CD4-positive, alpha-beta memory T cell (primary cell): ENCODE measurements at regions of chr4 and their contacts with region 1.

Region 1: DNA sequence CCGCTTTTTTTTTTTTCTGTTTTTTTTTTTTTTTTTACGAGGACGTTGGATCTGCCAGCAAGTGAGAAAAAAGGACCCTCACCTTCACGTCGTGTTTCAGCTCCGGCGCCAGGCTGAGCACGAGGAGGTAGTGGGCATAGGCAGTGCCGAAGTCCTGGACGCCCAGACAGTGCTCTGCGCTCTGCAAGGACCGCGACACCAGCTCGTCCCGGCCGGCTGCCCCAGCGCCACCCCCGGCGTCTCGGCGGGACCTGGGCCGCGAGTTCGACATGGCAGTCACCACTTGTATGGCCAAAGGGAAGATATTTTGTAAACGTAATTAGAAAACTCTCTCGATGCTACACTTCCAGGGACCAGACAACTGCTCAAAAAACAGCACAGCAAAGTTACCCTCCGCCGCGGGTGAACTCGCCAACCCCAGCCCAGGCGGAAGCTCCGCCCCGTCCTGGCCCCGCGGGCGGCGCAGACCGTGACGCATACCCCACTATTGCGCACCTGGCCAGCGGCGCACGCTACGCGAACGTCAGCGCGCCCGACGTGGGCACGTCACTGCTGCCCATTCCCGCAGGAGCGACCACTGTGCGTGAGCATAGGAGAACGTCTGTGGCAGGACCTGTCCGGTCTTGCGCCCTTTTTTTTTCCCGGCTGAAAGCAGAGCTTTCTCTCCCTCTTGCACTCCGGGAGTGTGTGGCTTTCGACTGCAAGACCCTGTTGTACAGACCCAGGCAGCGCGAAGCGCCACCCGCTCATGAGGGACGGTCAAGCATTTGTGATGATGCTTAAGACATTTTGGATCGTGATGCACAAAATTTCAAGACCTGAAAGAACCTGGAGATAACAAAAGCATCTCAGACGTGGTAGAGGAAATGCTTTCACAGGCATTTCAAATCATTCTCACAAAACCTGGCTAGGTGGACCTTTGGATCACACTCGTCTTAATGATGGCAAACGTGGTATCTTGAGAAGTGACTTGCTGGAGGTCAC is at the start of gene PRMT9:
- DNase-seq: peak; percentile 82 to 89 (median 85)
- H3K4me3 ChIP-seq: peak within 1 kb of the TSS; percentile 75 to 96
- H3K4me3 Mint-ChIP-seq: peak within 1 kb of the TSS; percentile 92 to 99 (median 96)
- H3K27ac ChIP-seq: peak within 1 kb of the TSS; percentile 89
- H3K27ac Mint-ChIP-seq: peak within 1 kb of the TSS; percentile 96 to 99 (median 98)
- H3K4me1 ChIP-seq: peaks cover 15% of the 10 kb centered on the region
- H3K4me1 Mint-ChIP-seq: peaks cover 25 to 42% (median 33%) of the 10 kb centered on the region in 4 donors
- H3K27me3 ChIP-seq: no peaks in the 10 kb centered on the region
- H3K27me3 Mint-ChIP-seq: peaks cover 3% of the 10 kb centered on the region in 2 donors
- total RNA-seq, gene PRMT9: 12.1 to 12.6 TPM

Region 2: DNA sequence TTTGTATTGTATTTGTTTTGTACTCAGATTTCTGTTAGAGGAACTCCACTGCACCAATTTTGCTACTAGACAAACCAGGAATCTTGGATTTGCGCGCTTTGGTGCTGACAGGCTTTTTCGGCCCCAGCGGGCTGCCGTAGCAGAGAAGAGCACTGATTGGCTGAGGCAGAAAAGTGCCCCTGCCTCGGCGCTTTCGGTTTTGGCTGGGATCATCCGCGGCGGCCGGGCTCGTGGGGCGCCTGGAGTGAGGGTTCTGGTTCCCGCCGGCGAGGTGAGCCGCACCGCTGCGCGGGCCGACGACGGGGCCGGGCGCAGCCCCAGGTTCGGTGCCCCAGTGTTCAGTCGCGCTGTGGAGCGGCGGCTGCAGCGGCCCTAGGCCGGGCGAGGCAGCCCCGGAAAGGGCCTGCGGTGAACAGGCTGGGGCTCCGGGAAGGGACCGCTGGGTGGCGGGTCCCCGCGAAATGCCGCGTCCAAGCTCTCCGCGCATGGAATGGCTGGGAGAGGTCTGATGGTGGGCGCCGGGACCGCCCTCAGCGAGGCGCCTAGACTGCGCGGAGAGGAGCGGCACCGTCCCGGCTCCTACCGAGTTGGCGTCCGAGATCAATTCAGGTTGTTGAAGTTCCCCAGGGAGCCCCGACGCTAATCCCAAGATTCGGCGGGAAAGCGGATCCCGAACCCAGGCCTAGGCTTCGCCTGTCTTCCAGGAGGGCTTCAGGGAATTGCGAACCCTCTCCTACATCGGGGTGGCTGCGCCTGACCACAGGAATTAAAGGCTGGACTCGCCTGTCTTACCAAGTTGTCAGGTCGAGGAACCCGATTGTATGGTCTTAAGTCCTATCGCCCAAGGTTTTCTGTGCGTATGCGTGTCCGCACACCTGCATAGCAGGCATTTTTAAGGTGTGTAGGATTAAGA is 1508.2 kb before region 1 on chr4 and contains the start of gene LSM6:
- CTCF ChIA-PET with region 1: no interaction called
- POLR2A ChIA-PET with region 1: no interaction called
- intact Hi-C with region 1: loop called (anchors 10 kb)
- DNase-seq: peak; percentile 83 to 87 (median 84)
- H3K4me3 ChIP-seq: peak within 1 kb of the TSS; percentile 39 to 96
- H3K4me3 Mint-ChIP-seq: peak within 1 kb of the TSS; percentile 86 to 96 (median 92)
- H3K27ac ChIP-seq: peak within 1 kb of the TSS; percentile 81
- H3K27ac Mint-ChIP-seq: peak within 1 kb of the TSS; percentile 93 to 98 (median 97)
- H3K4me1 ChIP-seq: peaks cover 53% of the 10 kb centered on the region
- H3K4me1 Mint-ChIP-seq: peaks cover 34 to 63% (median 42%) of the 10 kb centered on the region in 4 donors
- H3K27me3 ChIP-seq: no peaks in the 10 kb centered on the region
- H3K27me3 Mint-ChIP-seq: no peaks in the 10 kb centered on the region
- total RNA-seq, gene LSM6: 47.7 to 54.0 TPM

Region 3: GRCh38 chr4:147617173-147617840 is 66.7 kb before region 1 on chr4 and contains the start of gene TMEM184C:
- CTCF ChIA-PET with region 1: interaction called, 7 read pairs
- POLR2A ChIA-PET with region 1: interaction called, 63 read pairs
- intact Hi-C with region 1: loop called (anchors 1 kb)
- DNase-seq: peak; percentile 97 to 98 (median 98)
- H3K4me3 ChIP-seq: peak within 1 kb of the TSS; percentile 82 to 99
- H3K4me3 Mint-ChIP-seq: peak within 1 kb of the TSS; percentile 92 to 98 (median 96)
- H3K27ac ChIP-seq: peak within 1 kb of the TSS; percentile 93
- H3K27ac Mint-ChIP-seq: peak within 1 kb of the TSS; percentile 96 to 99 (median 97)
- H3K4me1 ChIP-seq: peaks cover 49% of the 10 kb centered on the region
- H3K4me1 Mint-ChIP-seq: peaks cover 22 to 51% (median 36%) of the 10 kb centered on the region in 4 donors
- H3K27me3 ChIP-seq: no peaks in the 10 kb centered on the region
- H3K27me3 Mint-ChIP-seq: peaks cover 0 to 1% of the 10 kb centered on the region in 2 donors
- total RNA-seq, gene TMEM184C: 28.8 to 31.5 TPM

Region 4: GRCh38 chr4:147707865-147708672 is 24.1 kb after region 1 on chr4:
- CTCF ChIA-PET with region 1: interaction called, 10 read pairs
- POLR2A ChIA-PET with region 1: no interaction called
- intact Hi-C with region 1: no loop called
- DNase-seq: peak; percentile 51 to 62 (median 55)
- H3K4me3 ChIP-seq: no peak overlapping the region
- H3K4me3 Mint-ChIP-seq: no peak overlapping the region
- H3K27ac ChIP-seq: no peak overlapping the region
- H3K27ac Mint-ChIP-seq: peak overlapping the region in 1 of 7 donors; percentile 7
- H3K4me1 ChIP-seq: no peaks in the 10 kb centered on the region
- H3K4me1 Mint-ChIP-seq: peaks cover 0 to 3% (median under 1%) of the 10 kb centered on the region in 4 donors
- H3K27me3 ChIP-seq: no peaks in the 10 kb centered on the region
- H3K27me3 Mint-ChIP-seq: no peaks in the 10 kb centered on the region

Region 5: GRCh38 chr4:147731580-147732517 is 47.8 kb after region 1 on chr4 and contains the start of gene ARHGAP10:
- CTCF ChIA-PET with region 1: interaction called, 11 read pairs
- POLR2A ChIA-PET with region 1: interaction called, 34 read pairs
- intact Hi-C with region 1: loop called (anchors 1 kb)
- DNase-seq: peak; percentile 57 to 79 (median 65)
- H3K4me3 ChIP-seq: peak within 1 kb of the TSS; percentile 76 to 84
- H3K4me3 Mint-ChIP-seq: peak within 1 kb of the TSS; percentile 90 to 97 (median 93)
- H3K27ac ChIP-seq: peak within 1 kb of the TSS; percentile 57
- H3K27ac Mint-ChIP-seq: peak within 1 kb of the TSS; percentile 91 to 97 (median 94)
- H3K4me1 ChIP-seq: peaks cover 26% of the 10 kb centered on the region
- H3K4me1 Mint-ChIP-seq: peaks cover 30 to 47% (median 42%) of the 10 kb centered on the region in 4 donors
- H3K27me3 ChIP-seq: no peaks in the 10 kb centered on the region
- H3K27me3 Mint-ChIP-seq: no peaks in the 10 kb centered on the region
- total RNA-seq, gene ARHGAP10: 8.2 to 8.3 TPM

Region 6: DNA sequence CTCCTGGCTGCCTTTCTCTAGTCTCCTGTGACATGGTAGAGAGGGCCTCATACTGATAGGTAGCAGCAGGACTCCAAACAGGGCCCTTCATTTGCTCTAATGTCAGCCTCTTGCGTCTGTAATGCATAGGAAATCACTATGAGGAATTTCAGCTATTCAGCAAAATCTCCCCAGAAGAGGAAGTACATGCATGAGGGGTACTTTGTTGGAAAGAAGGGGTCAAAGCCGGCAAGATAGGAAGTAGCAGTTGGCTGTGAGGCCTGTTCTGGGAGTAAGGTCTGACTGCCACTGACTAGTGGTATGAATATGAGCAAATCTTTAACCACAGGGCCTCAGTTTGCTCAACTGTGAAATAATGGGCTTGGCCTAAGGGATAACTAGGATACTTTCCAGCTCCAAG is 331.0 kb after region 1 on chr4:
- CTCF ChIA-PET with region 1: no interaction called
- POLR2A ChIA-PET with region 1: no interaction called
- intact Hi-C with region 1: no loop called
- DNase-seq: no peak
- H3K4me3 ChIP-seq: no peak overlapping the region
- H3K4me3 Mint-ChIP-seq: no peak overlapping the region
- H3K27ac ChIP-seq: no peak overlapping the region
- H3K27ac Mint-ChIP-seq: no peak overlapping the region
- H3K4me1 ChIP-seq: no peaks in the 10 kb centered on the region
- H3K4me1 Mint-ChIP-seq: peaks cover 0 to 4% (median 2%) of the 10 kb centered on the region in 4 donors
- H3K27me3 ChIP-seq: no peaks in the 10 kb centered on the region
- H3K27me3 Mint-ChIP-seq: no peaks in the 10 kb centered on the region

Region 7: DNA sequence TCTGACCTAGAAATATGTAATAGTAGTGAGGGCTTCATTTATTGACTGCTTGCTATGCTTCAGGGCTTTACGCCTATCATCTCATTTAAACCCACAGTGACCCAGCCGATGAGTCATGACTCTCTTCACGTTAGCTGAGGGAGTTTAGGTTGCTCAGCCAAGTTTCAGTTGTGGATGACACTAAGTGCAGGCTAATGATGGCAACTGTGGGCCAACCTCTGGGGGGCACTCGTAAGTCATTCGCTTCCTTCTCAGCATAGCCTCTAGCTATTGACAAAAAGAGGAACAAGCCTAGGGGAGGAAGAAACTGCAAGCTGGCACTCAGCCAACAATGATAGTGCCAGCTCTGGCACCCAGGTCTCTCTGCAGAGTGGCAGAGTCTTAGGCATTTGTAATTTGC is 372.9 kb after region 1 on chr4:
- CTCF ChIA-PET with region 1: no interaction called
- POLR2A ChIA-PET with region 1: no interaction called
- intact Hi-C with region 1: loop called (anchors 10 kb)
- DNase-seq: peak; percentile 37 to 77 (median 54)
- H3K4me3 ChIP-seq: no peak overlapping the region
- H3K4me3 Mint-ChIP-seq: peak overlapping the region in 6 of 8 donors; percentile 6 to 76 (median 44)
- H3K27ac ChIP-seq: peak overlapping the region; percentile 11
- H3K27ac Mint-ChIP-seq: peak overlapping the region; percentile 59 to 92 (median 85)
- H3K4me1 ChIP-seq: peaks cover 98% of the 10 kb centered on the region
- H3K4me1 Mint-ChIP-seq: peaks cover 71 to 98% (median 88%) of the 10 kb centered on the region in 4 donors
- H3K27me3 ChIP-seq: no peaks in the 10 kb centered on the region
- H3K27me3 Mint-ChIP-seq: no peaks in the 10 kb centered on the region